ENCODE measurements at regions of chr3 and their contacts with region 1.

Region 1: DNA sequence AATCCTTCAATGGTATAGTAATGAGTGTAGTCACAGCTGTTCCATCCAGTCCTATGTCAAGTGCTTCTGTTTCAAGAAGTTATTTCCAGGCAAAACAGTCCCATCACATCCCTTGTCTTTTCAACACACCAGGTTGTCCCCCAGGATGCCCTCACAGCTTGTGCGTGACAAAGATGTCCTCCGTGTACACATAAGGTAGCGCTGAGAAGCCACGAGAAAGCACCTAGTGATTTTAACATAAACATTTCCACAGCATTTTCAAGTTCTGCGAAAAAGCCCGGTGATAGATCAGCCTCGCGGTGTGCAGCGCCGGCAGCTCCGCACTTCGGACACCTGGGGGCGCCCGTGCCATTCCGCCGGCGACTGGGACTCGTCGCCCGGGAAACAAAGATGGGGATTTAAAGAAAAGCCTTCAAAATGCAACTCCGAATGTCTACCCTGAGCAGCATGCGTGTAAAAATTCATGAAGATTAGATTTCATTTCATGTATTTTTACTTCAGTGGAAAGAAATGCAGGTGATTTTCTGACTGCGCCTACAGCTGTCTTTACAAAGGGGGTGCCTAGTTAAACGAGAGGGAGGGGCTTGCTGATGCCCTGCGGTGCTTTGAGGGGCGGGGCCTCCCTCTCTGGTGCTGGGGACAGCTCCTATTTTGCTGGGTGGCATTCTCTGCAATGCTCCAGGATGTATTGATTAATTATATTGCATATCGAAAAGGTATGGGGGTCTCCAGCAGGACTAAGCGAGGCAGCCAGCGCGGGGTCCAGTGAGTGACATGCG is 49.9 kb downstream of the KY start:
- DNase-seq: peak in 1 of 2 experiments; percentile 70
- H3K4me3 ChIP-seq: no peak overlapping the region
- H3K27ac ChIP-seq: no peak overlapping the region
- H3K4me1 ChIP-seq: no peaks in the 10 kb centered on the region
- H3K27me3 ChIP-seq: peaks cover 59% of the 10 kb centered on the region
- CTCF ChIP-seq: peak; percentile 94

Region 2: GRCh38 chr3:134449277-134449676 is 151.6 kb before region 1 on chr3:
- CTCF ChIA-PET with region 1: no interaction called
- POLR2A ChIA-PET with region 1: no interaction called
- intact Hi-C with region 1: no loop called
- DNase-seq: peak in 1 of 2 experiments; percentile 27
- H3K4me3 ChIP-seq: no peak overlapping the region
- H3K27ac ChIP-seq: no peak overlapping the region
- H3K4me1 ChIP-seq: peaks cover 18% of the 10 kb centered on the region
- H3K27me3 ChIP-seq: no peaks in the 10 kb centered on the region
- CTCF ChIP-seq: peak; percentile 49

Region 3: DNA sequence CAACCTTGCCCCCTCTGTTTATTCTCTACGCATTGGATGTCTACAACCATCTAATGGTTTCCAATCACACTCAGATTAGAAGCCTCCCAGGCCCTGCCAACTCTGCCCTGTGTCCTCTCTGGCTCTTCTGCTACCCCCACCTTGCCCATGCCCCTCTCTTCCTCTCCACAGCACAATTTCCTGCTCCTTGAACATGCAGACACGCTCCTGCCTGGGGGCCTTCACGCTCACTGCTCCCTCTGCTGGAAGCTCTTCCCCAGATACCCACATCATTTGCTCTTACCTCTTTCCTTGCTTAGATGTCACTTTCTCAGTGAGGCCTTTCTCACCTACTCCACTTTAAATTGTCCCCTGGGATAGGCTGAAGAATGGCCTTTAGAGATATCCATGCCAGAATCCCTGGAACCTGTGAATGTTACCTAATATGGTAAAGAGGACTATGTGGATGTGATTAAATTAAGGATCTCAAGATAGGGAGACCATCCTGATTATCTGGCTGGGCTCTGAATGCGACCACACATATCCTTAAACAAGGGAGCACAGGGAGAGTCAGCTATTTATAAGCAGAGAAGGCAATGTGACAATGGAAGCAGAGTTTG is 40.1 kb after region 1 on chr3:
- CTCF ChIA-PET with region 1: interaction called, 23 read pairs
- POLR2A ChIA-PET with region 1: no interaction called
- intact Hi-C with region 1: no loop called
- DNase-seq: no peak
- H3K4me3 ChIP-seq: no peak overlapping the region
- H3K27ac ChIP-seq: no peak overlapping the region
- H3K4me1 ChIP-seq: no peaks in the 10 kb centered on the region
- H3K27me3 ChIP-seq: peaks cover 58% of the 10 kb centered on the region
- CTCF ChIP-seq: peak; percentile 48

Region 4: DNA sequence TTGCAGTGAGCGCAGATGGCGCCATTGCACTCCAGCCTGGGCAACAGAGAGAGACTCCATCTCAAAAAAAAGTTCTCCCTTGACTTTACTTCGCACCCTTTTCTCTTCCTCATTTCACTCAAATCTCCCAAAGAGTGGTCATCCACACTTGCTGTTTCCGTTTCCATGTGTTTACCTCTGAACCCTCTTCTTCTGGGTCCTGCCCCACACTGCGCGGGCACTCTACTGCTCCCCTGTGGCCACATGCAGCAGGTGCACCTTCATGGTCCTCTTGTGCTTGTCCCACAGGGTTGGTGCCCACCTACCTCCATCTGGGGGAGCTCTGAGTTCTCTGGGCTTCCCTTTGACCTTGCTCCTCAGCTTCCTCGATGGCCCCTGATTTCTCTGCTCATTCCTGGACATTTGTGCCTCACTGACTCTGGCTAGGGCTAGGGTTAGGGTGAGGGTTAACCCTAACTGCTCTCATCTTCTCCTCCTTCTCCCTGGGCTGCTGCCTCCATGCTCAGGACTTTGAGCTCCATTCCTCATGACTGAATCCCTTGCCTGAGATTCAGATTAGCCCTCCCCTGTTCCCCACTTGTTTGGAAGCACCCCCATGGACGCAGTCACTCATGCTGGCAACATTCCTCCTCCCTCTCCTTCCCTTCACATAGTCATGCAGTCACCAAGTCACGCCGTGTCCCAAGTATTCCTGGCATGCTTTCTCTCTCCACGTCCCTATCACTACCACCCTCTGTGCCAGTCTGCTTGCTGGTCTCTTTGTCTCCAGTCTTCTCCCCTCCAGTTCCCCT is 76.5 kb after region 1 on chr3:
- CTCF ChIA-PET with region 1: no interaction called
- POLR2A ChIA-PET with region 1: no interaction called
- intact Hi-C with region 1: loop called (anchors 5 kb)
- DNase-seq: peak in 1 of 2 experiments; percentile 7
- H3K4me3 ChIP-seq: no peak overlapping the region
- H3K27ac ChIP-seq: no peak overlapping the region
- H3K4me1 ChIP-seq: no peaks in the 10 kb centered on the region
- H3K27me3 ChIP-seq: peaks cover 12% of the 10 kb centered on the region
- CTCF ChIP-seq: peak; percentile 61

Region 5: GRCh38 chr3:134754768-134755559 is 154.1 kb after region 1 on chr3:
- CTCF ChIA-PET with region 1: no interaction called
- POLR2A ChIA-PET with region 1: no interaction called
- intact Hi-C with region 1: loop called (anchors 10 kb)
- DNase-seq: peak in 1 of 2 experiments; percentile 14
- H3K4me3 ChIP-seq: no peak overlapping the region
- H3K27ac ChIP-seq: no peak overlapping the region
- H3K4me1 ChIP-seq: no peaks in the 10 kb centered on the region
- H3K27me3 ChIP-seq: peaks cover 53% of the 10 kb centered on the region
- CTCF ChIP-seq: peak; percentile 68; the same call in 1 of the 2 replicates

Region 6: DNA sequence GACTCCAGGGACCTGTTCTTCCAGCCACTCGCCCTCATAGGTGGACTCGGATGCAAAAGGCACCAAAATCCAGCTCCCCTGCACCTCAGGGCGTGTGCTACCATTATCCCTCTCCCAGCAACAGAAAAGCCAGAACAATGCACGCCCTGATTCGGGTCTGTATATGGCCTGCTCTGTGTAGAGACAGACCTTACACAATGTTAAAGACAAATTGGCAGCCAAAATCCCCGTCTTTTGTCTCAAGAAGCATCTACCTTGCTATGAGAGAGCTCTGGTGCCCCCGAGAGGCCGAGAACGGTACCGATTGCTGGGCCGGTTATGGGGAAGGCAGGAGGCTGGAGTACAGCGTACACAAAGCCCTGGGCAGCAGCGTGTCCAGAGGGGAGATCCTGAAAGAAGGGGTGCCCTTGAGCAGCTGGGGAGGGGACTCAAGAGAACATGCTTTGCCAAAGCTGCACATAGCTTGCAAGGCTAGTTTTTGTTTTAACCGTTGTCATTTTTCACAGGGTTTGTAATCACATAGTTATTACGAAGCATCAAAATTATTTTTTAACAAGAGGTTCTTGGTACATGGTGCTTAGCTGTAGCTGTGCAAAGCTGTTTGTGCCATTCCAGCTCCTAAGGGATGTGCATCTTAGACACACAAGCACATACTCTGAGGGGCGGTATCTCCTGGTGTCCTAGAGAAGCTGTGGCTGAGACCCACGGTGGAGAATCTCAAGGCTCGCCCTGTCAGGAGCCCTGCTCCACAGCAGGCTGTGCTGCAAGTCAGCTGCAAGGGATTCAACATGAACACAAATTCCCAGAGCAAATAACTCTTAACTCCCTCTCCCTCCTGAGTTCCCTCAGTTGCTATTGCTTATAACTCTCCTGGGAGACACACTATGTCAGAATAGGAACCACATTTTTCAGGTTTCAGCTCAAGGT is 903.1 kb after region 1 on chr3:
- CTCF ChIA-PET with region 1: no interaction called
- POLR2A ChIA-PET with region 1: no interaction called
- intact Hi-C with region 1: loop called (anchors 10 kb)
- DNase-seq: peak in 1 of 2 experiments; percentile 55
- H3K4me3 ChIP-seq: no peak overlapping the region
- H3K27ac ChIP-seq: no peak overlapping the region
- H3K4me1 ChIP-seq: no peaks in the 10 kb centered on the region
- H3K27me3 ChIP-seq: peaks cover 75% of the 10 kb centered on the region
- CTCF ChIP-seq: peak; percentile 71

Region 7: DNA sequence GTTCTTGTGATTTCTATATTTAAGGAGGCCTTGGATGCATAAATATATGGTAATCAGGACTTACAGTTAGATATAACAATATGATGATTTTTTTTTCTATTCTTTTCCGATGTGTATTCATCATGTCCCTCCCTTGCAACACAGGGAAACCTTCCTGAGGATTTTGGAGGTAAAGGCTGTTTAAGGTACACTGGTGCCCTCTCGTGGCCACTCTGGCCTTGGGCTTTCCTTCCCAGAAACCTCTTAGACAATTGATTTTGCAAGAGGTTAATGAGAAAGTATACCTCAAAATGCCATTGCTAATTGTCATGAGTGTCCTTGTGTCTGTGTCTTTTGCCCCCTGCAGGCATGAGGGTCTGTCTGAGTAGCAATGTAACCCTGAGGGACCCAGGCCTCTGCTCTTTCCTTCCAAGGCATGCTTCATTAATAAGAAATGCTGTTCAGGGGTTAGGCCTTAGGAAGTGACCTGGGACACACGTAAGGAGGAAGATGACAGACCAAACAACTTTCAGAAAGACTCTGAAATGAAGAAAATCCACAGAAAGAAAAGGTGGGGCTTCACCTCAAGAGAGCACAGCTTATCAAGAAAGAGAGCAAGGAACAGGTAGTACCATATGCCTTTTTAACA is 1294.3 kb after region 1 on chr3:
- CTCF ChIA-PET with region 1: no interaction called
- POLR2A ChIA-PET with region 1: no interaction called
- intact Hi-C with region 1: loop called (anchors 1 kb)
- DNase-seq: peak; percentile 70 to 76
- H3K4me3 ChIP-seq: no peak overlapping the region
- H3K27ac ChIP-seq: no peak overlapping the region
- H3K4me1 ChIP-seq: peaks cover 20% of the 10 kb centered on the region
- H3K27me3 ChIP-seq: no peaks in the 10 kb centered on the region
- CTCF ChIP-seq: peak; percentile 90

Region 8: DNA sequence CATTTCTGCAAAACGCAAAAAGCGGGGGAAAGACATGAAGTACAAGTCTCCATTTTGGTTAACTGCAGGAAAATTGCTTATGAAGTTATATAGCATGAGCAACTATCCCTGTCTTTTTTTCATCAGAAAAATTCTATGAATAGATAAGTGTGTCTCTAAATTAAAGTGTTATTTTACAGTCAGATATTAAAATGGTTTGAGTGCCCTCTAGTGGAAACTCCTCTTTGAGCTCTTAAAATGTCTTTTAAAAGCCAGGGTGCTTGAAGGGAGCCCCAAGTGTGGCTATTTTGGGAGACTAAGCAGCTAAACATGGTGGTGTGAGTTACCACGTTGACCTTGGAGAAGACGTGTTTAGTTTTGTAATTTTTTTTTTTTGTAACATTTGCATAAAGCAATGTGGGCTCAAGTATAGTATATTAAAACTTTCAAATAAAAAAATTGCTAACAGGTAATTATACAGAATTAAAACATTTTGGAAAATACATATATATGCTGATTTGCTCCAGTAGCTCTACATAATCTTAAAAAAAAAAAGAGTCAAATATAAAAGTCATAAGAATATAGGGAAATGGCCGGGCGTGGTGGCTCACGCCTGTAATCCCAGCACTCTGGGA is 1441.8 kb after region 1 on chr3:
- CTCF ChIA-PET with region 1: no interaction called
- POLR2A ChIA-PET with region 1: no interaction called
- intact Hi-C with region 1: loop called (anchors 1 kb)
- DNase-seq: peak in 1 of 2 experiments; percentile 48
- H3K4me3 ChIP-seq: no peak overlapping the region
- H3K27ac ChIP-seq: no peak overlapping the region
- H3K4me1 ChIP-seq: no peaks in the 10 kb centered on the region
- H3K27me3 ChIP-seq: no peaks in the 10 kb centered on the region
- CTCF ChIP-seq: peak; percentile 82

Measured in PC-9 (cell line).